CD4-positive, alpha-beta memory T cell (primary cell): ENCODE measurements at regions of chr10 and their contacts with region 1.

Region 1: GRCh38 chr10:112375721-112376395 is 1.9 kb downstream of the ACSL5 start:
- DNase-seq: peak; percentile 56 to 72 (median 70)
- H3K4me3 ChIP-seq: peak overlapping the region; percentile 60 to 99
- H3K4me3 Mint-ChIP-seq: peak overlapping the region; percentile 97 to 100 (median 100)
- H3K27ac ChIP-seq: peak overlapping the region; percentile 97
- H3K27ac Mint-ChIP-seq: peak overlapping the region; percentile 95 to 100 (median 100)
- H3K4me1 ChIP-seq: peaks cover 53% of the 10 kb centered on the region
- H3K4me1 Mint-ChIP-seq: peaks cover 47 to 76% (median 61%) of the 10 kb centered on the region in 4 donors
- H3K27me3 ChIP-seq: no peaks in the 10 kb centered on the region
- H3K27me3 Mint-ChIP-seq: no peaks in the 10 kb centered on the region

Region 2: DNA sequence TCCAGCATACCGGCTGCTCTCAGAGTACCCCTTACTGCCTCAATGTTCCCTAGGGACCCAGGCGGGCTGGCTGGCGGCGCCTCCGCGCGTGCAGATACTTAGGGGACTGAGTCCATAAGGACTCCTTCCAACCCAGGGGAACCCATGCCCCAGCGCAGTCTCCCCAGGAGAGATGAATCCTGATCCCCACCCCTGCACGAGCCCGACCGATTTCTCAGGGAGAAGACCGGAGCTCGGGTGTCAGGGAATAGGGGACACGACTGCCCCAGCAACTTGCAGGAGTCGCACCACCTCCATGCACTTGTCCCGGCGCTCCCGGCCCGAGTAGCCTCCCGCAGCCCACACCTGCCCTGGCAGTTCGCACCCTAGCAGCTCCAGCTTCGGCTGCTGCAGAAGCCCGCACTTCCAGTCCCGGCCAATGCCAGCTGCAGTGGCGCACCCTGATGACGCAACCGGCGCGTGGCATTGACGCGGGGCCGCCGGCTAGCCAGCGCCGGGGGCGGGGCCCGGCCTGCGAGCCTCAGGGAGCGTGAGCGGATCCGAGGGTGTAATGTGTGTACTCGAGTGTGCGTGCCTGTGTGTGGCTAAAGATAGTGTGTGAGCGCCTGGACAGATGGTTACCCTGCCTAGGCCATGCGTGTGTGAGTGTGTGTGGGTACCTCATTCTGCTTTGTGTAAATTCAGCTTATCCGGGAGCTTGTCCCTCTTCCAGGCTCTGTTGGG is 192.4 kb before region 1 on chr10 and contains the start of gene GPAM:
- CTCF ChIA-PET with region 1: interaction called, 3 read pairs
- POLR2A ChIA-PET with region 1: interaction called, 13 read pairs
- intact Hi-C with region 1: loop called (anchors 5 kb)
- DNase-seq: peak; percentile 93 to 99 (median 95)
- H3K4me3 ChIP-seq: peak within 1 kb of the TSS; percentile 85 to 95
- H3K4me3 Mint-ChIP-seq: peak within 1 kb of the TSS; percentile 83 to 98 (median 94)
- H3K27ac ChIP-seq: peak within 1 kb of the TSS; percentile 59
- H3K27ac Mint-ChIP-seq: peak within 1 kb of the TSS; percentile 85 to 98 (median 97)
- H3K4me1 ChIP-seq: peaks cover 18% of the 10 kb centered on the region
- H3K4me1 Mint-ChIP-seq: peaks cover 17 to 43% (median 26%) of the 10 kb centered on the region in 4 donors
- H3K27me3 ChIP-seq: no peaks in the 10 kb centered on the region
- H3K27me3 Mint-ChIP-seq: peaks cover 0 to 1% of the 10 kb centered on the region in 2 donors
- total RNA-seq, gene GPAM: 6.3 to 8.8 TPM

Region 3: DNA sequence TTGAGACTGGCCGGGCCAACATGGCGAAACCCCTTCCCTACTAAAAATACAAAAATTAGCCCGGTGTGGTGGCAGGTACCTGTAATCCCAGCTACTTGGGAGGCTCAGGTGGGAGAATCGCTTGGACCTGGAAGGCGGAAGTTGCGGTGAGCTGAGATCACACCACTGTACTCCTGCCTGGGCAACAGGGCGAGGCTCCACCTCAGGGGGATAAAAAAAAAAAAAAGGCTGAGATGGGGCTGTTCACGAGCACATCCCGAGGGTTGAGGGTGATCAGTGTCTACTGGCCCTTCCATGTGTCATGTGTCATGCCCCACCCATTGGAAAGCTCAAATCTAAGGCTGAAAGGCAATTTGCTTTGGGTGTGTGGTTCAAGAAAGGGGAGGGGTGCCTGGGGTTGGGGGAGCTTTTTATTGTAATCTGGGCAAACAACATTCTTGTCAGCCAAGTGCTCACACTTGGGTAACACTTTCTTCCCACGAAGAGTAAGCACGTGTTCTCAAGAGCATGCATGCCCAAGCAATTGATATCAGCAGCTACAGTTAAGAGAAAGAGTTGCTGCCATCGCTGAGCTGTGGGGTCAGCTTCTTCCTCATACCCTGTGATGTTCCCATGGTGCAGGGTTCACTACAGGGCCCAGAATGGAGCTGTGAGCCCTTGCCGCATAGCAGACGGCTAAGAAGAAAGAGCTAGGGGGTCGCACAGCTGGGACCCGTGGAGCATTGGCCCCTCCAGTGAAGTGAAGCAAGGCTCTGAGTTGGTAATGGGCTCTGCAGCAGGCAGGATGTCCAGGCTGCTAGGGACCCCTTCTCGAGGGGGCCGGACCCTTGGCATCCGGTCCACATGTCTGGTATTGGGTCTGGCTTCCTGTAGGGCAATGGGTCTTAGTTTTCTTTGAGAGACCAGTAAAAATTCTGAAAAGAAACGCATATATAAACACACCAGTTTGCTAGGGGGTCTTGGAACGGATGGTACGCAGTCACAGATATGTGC is 11.9 kb before region 1 on chr10:
- CTCF ChIA-PET with region 1: interaction called, 12 read pairs
- POLR2A ChIA-PET with region 1: interaction called, 14 read pairs
- intact Hi-C with region 1: no loop called
- DNase-seq: no peak
- H3K4me3 ChIP-seq: no peak overlapping the region
- H3K4me3 Mint-ChIP-seq: no peak overlapping the region
- H3K27ac ChIP-seq: no peak overlapping the region
- H3K27ac Mint-ChIP-seq: no peak overlapping the region
- H3K4me1 ChIP-seq: peaks cover 11% of the 10 kb centered on the region
- H3K4me1 Mint-ChIP-seq: peaks cover 1 to 8% (median 6%) of the 10 kb centered on the region in 4 donors
- H3K27me3 ChIP-seq: no peaks in the 10 kb centered on the region
- H3K27me3 Mint-ChIP-seq: peaks cover 0 to 3% of the 10 kb centered on the region in 2 donors

Region 4: DNA sequence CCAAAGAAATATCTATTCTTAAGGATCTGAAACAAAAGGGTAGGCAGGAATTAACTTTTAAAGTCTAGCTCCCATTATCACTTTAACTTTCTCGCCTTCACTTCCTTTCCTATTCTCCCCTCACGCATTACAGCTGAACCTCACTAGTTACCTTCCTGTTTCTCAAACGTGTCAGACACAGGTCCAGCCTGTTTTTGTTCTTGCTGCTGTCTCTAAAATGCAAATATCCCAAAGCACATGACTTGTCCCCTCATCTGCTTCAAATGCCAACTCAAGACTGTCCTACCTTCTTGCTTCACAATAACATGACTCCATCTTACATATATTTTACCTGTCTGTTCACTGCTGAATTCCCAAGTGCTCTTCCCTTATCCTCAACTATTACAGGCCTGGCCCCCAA is 53.3 kb after region 1 on chr10:
- CTCF ChIA-PET with region 1: interaction called, 5 read pairs
- POLR2A ChIA-PET with region 1: interaction called, 14 read pairs
- intact Hi-C with region 1: loop called (anchors 10 kb)
- DNase-seq: no peak
- H3K4me3 ChIP-seq: no peak overlapping the region
- H3K4me3 Mint-ChIP-seq: no peak overlapping the region
- H3K27ac ChIP-seq: no peak overlapping the region
- H3K27ac Mint-ChIP-seq: peak overlapping the region; percentile 7 to 82 (median 38)
- H3K4me1 ChIP-seq: no peaks in the 10 kb centered on the region
- H3K4me1 Mint-ChIP-seq: peaks cover 0 to 3% (median 0%) of the 10 kb centered on the region in 4 donors
- H3K27me3 ChIP-seq: no peaks in the 10 kb centered on the region
- H3K27me3 Mint-ChIP-seq: no peaks in the 10 kb centered on the region

Region 5: DNA sequence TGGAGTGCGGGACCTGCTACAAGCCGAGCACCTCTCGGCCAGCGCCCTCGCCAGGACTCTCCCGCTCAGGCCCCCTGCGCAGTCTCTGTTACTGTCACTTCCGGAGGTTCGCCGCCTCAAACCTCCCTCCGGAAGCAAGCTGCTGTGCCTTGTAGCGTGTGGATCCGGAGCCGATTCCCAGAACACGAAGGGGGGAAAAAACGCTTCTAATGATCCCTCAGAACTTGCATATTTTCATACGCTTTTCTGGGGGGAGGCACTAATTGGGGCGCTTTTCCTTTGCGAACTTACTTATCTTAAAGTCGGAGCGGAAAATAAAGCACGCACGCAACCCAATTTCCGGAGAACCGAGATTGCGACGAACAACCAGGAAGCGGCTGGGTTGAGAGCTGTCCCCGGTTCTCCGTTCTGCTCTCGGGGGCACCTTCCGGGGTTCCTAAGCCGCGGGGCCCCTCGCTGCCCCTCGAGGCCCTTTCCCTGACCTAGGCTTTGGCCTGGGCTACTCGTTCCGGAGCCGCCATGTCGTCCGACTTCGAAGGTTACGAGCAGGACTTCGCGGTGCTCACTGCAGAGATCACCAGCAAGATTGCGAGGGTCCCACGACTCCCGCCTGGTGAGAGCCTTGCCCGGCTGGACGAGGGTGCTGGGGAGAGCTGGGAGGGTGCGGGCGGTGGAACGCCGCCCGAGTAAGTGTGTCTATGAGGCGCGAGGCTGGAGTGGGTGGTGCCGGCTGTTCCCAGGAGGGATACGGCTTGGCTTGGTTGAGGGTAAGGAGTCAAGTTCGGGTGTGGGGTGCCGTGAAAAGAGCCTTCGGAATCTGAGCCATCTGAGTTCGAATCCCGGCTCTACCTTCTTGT is 71.2 kb after region 1 on chr10 and contains the starts of genes VTI1A and ZDHHC6:
- CTCF ChIA-PET with region 1: interaction called, 3 read pairs
- POLR2A ChIA-PET with region 1: interaction called, 33 read pairs
- intact Hi-C with region 1: loop called (anchors 5 kb)
- DNase-seq: peak; percentile 84 to 87 (median 86)
- H3K4me3 ChIP-seq: peak within 1 kb of the TSS; percentile 97 to 99
- H3K4me3 Mint-ChIP-seq: peak within 1 kb of the TSS; percentile 90 to 100 (median 94)
- H3K27ac ChIP-seq: peak within 1 kb of the TSS; percentile 86
- H3K27ac Mint-ChIP-seq: peak within 1 kb of the TSS; percentile 81 to 99 (median 97)
- H3K4me1 ChIP-seq: peaks cover 42% of the 10 kb centered on the region
- H3K4me1 Mint-ChIP-seq: peaks cover 26 to 64% (median 50%) of the 10 kb centered on the region in 4 donors
- H3K27me3 ChIP-seq: no peaks in the 10 kb centered on the region
- H3K27me3 Mint-ChIP-seq: no peaks in the 10 kb centered on the region
- total RNA-seq, gene VTI1A: 47.0 to 48.5 TPM
- total RNA-seq, gene ZDHHC6: 60.6 to 61.2 TPM